ENCODE measurements at regions of chr17 and their contacts with region 1.

Region 1: DNA sequence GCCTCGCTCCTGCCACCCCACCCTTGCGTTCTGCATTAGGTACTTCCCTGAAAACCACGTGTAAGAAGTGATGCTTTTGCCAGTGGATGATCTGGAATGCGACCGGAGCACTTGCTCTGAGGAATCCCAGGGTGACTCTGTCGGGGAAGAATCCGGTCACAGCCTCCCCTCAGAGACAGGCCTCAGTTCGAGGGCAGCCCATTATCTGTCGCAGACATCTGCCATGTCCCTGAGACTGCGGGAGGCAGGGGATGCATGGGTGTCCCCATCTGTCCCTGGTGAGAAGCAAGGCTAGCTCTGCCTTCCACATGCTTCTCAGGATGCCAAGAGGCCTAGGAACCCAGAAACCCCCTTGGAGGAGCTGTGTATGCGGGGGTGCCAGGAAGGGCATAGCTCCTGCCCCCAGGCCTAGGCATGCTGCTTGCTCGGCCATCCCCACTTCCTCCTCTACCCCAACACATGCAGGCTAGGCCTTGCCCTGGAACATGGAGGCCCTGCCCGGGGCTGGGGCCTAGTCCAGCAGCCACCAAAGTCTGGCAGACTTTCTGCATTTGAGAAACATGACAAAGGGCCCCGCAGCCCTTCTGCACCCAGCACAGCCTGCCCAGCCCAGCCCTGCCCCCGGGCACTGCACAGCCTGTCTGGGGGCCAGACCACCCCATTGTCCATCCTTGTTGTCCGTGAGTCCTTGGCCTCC is 20.5 kb downstream of the MNT start:
- DNase-seq: no peak

Region 2: DNA sequence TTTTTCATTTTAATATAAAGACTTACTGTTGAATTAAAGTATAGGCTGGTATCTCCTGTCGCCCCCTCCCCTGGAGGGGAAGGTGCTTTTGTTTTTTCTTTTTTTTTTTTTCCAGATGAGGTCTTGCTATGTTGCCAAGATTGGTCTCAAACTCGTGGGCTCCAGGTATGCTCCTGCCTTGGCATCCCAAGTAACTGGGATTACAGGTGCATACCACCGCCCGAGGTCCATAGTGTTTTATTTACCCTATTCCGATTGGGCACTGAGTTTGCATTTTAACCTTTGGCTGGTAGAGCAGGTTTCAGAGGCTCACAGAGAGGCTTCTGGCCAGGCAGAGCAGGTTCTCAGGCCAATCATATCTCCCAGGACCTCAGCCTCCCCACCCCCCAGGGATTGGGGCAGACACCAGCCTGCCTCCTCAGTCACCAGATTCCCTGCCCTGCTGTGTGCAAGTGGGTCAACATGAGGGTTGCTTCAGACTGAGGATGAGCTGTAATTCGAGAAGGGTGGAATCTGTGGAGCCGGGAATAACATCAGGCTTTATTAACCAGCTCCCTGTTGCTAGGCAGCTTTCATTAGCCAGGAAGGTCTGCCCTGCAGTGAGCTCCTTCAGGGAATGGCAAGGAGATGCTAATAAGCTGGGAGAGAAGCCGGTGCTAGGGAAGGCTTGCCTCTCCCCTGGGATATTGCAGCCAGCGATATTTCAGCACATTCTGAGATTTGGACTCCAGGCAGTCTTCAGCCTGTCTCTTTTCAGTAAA is 32.6 kb before region 1 on chr17:
- intact Hi-C with region 1: loop called in 1 of 2 experiments (anchors 1 kb)
- DNase-seq: no peak

Region 3: DNA sequence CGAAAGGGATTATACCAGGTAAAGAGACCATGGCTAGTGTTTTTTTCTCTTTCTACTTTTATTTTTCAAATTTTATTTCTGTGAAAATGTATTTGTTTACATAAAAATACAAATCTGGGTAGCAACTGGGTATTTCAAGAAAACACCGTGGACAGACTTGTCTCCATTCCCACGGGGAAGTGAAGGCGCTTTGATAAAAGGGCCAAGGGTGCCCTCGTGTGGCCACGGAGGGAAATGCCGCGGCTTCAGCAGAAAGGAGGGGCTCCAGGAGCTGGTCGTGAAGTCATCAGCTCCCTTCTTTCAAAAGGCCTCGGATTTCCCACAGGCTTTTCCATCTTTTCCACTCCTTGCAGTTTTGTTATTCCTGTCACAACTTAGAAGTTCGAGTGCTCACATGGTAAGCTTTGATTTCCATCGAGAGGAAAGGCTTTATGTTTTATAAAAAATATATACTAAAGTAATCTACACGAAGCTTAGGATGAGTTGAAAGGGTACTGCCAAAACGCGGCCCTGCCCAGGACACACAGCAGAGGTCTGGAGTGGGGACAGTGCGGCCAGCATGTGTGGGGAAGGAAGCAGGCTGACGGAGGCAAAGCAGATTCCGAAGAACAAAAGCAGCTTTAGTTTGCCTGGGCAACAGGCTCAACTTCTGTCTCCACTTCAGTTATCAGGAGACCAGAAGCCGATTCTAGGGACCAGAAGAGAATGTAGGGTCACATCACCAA is 35.8 kb after region 1 on chr17:
- intact Hi-C with region 1: loop called (anchors 2 to 5 kb)
- DNase-seq: peak; percentile 96

Region 4: GRCh38 chr17:2427215-2427614 is 46.8 kb after region 1 on chr17:
- intact Hi-C with region 1: no loop called
- DNase-seq: no peak